ENCODE measurements at regions of chr6 and their contacts with region 1.

Region 1: DNA sequence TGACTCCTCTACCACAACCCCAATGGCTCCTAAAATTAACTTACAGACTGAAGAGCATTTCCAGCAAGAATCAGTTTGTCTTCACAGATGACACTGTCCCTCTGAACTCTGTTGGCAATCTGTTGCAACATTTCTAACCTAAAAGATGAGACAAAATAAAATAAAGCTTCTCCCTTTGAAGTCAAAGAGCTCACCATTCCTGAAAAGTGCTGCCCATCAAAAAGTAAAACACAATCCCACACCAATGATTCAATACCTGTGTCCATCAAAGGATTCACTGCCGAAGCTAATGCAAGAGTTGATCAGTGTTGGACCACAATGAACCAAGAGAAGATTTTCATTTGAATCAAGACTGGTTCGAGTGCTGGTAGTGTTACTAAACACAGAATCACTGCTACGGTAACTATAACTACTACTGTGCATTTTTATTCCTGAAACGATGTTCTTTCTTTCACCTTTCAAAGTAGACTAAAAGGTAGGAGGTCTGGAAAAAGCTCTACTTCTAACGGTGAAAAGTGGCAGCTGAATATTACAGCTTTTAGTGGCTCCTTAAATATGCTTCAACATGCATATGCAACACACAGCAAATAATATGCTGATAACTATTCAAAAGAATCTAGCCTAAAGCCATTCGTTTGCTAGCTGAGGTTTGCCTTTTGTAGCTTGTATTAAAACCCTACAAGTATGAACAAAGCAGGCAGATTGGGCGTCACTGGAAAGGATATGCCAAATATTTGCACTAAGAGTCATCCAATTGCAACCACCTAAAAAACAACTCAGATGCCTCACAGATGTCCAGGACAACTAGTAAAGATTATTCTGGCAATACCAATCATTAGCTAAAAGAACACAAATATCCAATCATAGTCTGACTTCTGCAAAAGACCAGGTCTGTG is at the start of gene DST:
- DNase-seq: no peak
- CTCF ChIP-seq: no peak

Region 2: DNA sequence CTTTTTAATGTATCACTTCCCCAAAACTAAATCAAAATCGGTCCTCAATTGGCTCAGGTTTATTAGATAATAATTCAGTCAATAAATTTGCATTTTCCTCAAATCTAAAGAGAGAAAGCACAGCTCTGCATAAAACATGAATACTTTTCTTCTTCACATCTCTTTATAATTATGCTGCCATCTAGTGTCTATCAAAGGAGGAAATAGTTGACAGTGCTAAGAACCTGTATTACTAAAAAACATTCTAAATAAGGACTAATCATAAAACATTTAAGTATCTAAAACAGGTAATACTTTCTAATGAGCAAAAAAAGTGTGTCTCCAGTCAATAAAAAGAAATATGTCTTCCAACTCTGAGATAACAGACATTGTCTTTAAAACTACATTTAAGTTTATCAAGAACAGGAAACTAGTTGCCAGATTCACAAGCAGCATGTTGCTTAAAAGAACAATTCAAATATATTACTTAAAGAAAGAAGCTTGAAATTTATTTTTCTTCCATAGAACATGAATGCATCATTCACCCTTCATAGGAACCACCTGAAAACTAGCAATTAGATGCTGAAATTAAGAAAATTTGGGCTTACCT is 56.5 kb after region 1 on chr6:
- in situ Hi-C with region 1: loop called (anchors 10 kb)
- DNase-seq: peak; percentile 20
- CTCF ChIP-seq: peak; percentile 50